Dendritic cell treated with granulocyte-macrophage colony-stimulating factor and Interleukin-4, amounts not matched to agents 40 ng/mL and 50 ng/mL, for 4 days (primary cell): ENCODE measurements at regions of chr1 and their contacts with region 1.

Region 1: GRCh38 chr1:157403203-157403602 is 149.1 kb downstream of the FCRL5 start:
- H3K4me3 Mint-ChIP-seq: peak overlapping the region; percentile 7
- H3K27ac Mint-ChIP-seq: peak overlapping the region; percentile 68
- H3K4me1 Mint-ChIP-seq: peaks cover 60% of the 10 kb centered on the region
- H3K27me3 Mint-ChIP-seq: no peaks in the 10 kb centered on the region

Region 2: GRCh38 chr1:157438146-157438545 is 34.9 kb after region 1 on chr1:
- intact Hi-C with region 1: loop called (anchors 5 kb)
- H3K4me3 Mint-ChIP-seq: no peak overlapping the region
- H3K27ac Mint-ChIP-seq: peak overlapping the region; percentile 75
- H3K4me1 Mint-ChIP-seq: peaks cover 64% of the 10 kb centered on the region
- H3K27me3 Mint-ChIP-seq: peaks cover 2% of the 10 kb centered on the region